ENCODE measurements at regions of chr22 and their contacts with region 1.

Region 1: DNA sequence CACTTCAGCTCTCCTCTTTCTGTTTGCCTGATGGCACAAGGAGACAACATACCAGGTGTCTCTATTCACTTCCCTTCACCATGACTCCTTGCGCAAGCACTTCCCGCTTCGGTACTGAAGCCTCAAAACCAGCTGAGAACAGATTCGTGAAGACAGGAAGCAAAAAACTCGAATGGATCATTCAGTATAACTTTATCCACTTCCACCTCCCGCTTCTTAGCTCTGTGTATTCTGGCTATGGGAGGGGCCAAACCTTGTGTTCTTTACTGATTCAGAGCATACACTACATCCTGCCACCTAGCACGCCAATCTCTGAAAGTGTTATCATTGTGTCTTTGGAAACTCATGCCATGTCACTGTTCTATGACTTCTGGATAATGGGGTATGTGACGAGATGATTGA is 62.2 kb upstream of the ADA2 start:
- DNase-seq: peak; percentile 28
- H3K4me3 Mint-ChIP-seq: peak overlapping the region; percentile 67
- H3K27ac Mint-ChIP-seq: peak overlapping the region; percentile 92
- H3K4me1 Mint-ChIP-seq: peaks cover 18% of the 10 kb centered on the region
- H3K27me3 Mint-ChIP-seq: peaks cover 10% of the 10 kb centered on the region

Region 2: DNA sequence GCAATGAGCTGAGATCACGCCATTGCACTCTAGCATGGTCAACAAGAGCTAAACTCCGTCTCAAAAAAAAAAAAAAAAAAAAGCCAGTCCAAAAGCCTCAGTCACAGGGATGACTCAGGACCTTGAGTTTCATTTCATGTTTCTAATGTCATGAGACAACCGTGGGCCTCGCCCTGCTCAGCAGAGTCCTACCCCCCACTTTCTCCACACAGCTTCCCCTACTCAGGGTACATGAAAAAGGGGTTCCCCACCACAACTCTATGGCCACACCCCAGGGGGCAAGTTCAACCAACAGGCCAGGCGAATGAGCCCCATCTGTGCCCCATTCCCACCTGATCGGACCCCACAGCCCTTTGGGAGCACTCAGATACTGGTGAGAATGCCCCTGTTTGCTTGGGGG is 37.9 kb before region 1 on chr22:
- intact Hi-C with region 1: no loop called
- DNase-seq: no peak
- H3K4me3 Mint-ChIP-seq: no peak overlapping the region
- H3K27ac Mint-ChIP-seq: peak overlapping the region; percentile 65
- H3K4me1 Mint-ChIP-seq: peaks cover 19% of the 10 kb centered on the region
- H3K27me3 Mint-ChIP-seq: no peaks in the 10 kb centered on the region

Region 3: DNA sequence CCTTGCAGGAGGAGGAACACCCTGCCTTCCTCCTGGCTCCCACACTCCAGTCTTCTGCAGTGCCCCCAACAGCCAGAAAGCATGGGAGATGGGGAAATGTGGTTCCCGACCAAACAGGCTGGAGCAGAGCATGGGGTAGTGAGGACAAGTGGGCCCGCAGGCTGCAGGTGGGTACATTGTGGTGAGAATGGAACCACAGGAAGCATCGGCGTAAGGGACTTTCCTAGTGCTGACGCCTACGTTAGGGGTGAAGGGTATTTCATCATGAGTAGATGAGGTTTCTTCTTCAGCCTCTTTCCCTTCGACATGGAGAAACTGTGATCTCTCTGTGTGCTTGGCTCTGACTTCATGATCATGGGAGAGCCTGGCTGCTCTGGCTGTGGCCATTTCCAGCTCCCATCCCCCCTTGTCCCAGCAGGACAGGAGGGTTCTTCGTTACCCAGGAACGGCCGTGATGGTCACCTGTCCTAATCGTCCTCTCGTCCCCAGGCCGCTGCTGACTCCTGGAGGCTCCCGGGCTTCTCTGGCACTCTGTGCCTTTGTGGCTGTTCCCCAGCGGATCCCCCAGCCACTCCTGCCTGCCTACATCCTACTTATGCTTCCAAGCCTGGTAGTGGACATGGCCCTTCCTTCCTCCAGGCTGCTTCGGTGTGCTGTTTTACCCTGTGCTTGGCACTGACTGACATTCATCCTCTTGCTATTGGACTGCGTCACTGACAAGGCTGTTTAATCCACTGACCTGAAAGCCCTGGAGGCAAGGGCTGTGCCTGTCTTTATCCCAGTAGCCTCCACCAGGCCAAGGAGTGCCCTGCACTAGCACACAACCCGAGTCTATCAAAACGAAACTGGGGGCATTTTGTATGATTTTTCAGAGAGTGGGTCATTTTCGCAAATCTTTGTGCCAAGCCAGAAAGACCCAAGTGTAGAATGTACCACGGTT is 22.7 kb after region 1 on chr22:
- intact Hi-C with region 1: loop called (anchors 1 kb)
- DNase-seq: peak; percentile 65
- H3K4me3 Mint-ChIP-seq: no peak overlapping the region
- H3K27ac Mint-ChIP-seq: peak overlapping the region; percentile 71
- H3K4me1 Mint-ChIP-seq: peaks cover 25% of the 10 kb centered on the region
- H3K27me3 Mint-ChIP-seq: no peaks in the 10 kb centered on the region

Region 4: GRCh38 chr22:17319546-17319945 is 38.1 kb after region 1 on chr22:
- intact Hi-C with region 1: no loop called
- DNase-seq: no peak
- H3K4me3 Mint-ChIP-seq: no peak overlapping the region
- H3K27ac Mint-ChIP-seq: no peak overlapping the region
- H3K4me1 Mint-ChIP-seq: no peaks in the 10 kb centered on the region
- H3K27me3 Mint-ChIP-seq: peaks cover 2% of the 10 kb centered on the region

Region 5: GRCh38 chr22:17339095-17339693 is 57.8 kb after region 1 on chr22:
- intact Hi-C with region 1: no loop called
- DNase-seq: no peak
- H3K4me3 Mint-ChIP-seq: no peak overlapping the region
- H3K27ac Mint-ChIP-seq: no peak overlapping the region
- H3K4me1 Mint-ChIP-seq: no peaks in the 10 kb centered on the region
- H3K27me3 Mint-ChIP-seq: peaks cover 18% of the 10 kb centered on the region

Measured in activated T-helper 2 cell treated with anti-CD3 and anti-CD28 coated beads, Interferon-gamma antibody, Interleukin-2, Interleukin-4, amounts not matched to agents 10 μg/mL and 5 μg/mL and 100 μg/mL, durations not matched to agents 14 hours and 24 hours and 36 hours (primary cell).